Motor neuron (in vitro differentiated cells): ENCODE measurements at regions of chr9 and their contacts with region 1.

Region 1: DNA sequence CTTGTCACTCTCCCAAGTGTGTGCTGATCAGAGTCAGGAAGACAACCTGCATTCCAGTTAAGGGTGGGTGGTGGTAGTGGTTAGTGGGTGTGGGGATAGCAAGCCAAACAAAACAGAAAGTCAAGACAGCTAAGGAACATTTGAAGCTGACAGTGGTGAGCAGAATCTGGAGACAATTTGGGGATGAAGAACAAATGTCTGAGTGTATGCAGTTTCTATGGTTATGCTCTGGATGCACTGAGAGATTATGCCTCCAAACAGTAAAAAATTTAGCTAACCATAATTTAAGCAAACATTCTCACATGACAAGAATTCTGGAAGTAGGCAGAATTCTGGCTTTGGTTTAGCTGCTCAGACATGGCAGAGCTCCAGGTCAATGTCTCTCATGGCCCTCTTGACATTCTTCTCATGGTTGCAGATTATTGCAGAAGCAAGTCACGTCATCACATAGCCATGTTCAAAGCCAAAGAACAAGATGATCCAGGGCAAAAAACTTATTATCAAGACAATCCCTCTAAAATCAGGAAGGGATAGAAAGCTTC is 148.7 kb downstream of the LURAP1L start:
- ATAC-seq: peak in 3 of 8 experiments; percentile 63 to 86 (median 80)
- H3K4me3 ChIP-seq: no peak overlapping the region
- H3K27ac ChIP-seq: no peak overlapping the region
- H3K4me1 ChIP-seq: peaks cover 0 to 4% of the 10 kb centered on the region in 2 donors

Region 2: GRCh38 chr9:12658531-12659209 is 264.9 kb before region 1 on chr9:
- in situ Hi-C with region 1: no loop called
- ATAC-seq: no peak
- H3K4me3 ChIP-seq: no peak overlapping the region
- H3K27ac ChIP-seq: no peak overlapping the region
- H3K4me1 ChIP-seq: no peaks in the 10 kb centered on the region

Region 3: DNA sequence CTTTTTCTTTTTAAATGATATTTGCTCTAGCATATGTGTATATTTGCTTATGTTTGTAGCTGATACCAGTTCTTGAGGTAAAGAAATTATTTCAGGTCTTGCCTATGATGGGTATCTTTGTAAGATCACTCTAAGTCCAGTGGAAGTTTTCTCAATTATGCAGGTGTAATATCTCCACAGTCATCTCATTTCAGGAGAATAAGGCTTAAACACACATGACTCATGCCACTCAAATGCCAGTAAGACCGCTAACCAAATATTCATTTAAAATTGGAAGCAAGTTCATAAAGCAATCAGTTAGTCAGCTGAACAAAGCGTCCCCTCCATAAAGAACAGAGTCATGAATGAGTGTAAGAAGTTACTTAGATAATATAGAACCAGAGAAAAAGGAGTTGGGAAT is 99.9 kb after region 1 on chr9:
- in situ Hi-C with region 1: loop called in 1 of 9 experiments (anchors 25 kb)
- ATAC-seq: no peak
- H3K4me3 ChIP-seq: no peak overlapping the region
- H3K27ac ChIP-seq: no peak overlapping the region
- H3K4me1 ChIP-seq: no peaks in the 10 kb centered on the region